ENCODE measurements at regions of chr3 and their contacts with region 1.

Region 1: GRCh38 chr3:155664925-155665695 is 79.8 kb downstream of the PLCH1 start:
- DNase-seq: peak; percentile 30 to 61
- ATAC-seq: peak; percentile 69 to 96 (median 89)
- H3K4me3 ChIP-seq: no peak overlapping the region
- H3K27ac ChIP-seq: peak overlapping the region in 1 of 10 donors; percentile 22
- H3K4me1 ChIP-seq: peaks cover 0 to 13% (median 0%) of the 10 kb centered on the region in 9 donors
- H3K27me3 ChIP-seq: no peaks in the 10 kb centered on the region
- CTCF ChIP-seq: no peak

Region 2: DNA sequence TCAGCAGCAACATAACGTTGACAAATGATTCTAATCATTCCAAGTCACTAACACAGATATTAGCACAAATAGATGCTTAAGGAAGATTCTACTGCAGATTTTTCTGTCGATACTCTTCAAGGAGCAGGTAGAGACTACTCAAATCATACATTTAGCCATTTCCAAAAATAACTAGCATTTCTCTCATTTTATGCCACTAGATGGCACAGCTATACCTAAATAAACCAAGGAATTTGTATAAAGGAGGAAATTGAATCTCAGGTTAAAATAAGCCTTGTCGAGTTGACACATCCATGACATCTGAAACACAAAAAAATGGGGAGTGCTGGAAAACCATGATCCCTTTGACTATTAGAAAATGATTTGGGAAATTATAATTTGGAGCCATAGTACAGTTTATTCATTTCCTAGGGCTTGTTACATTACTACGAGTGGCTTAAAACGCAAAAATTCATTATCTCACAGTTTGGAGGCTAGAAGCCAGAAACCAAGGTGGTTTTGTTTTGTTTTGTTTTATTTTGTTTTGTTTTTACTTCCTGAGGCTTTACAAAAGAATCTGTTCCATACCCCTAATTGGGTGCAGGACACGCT is 312.1 kb before region 1 on chr3:
- intact Hi-C with region 1: loop called in 1 of 10 experiments (anchors 5 kb)
- DNase-seq: no peak
- ATAC-seq: peak in 2 of 8 donors; percentile 37 to 39
- H3K4me3 ChIP-seq: no peak overlapping the region
- H3K27ac ChIP-seq: no peak overlapping the region
- H3K4me1 ChIP-seq: peaks cover 0 to 4% (median 0%) of the 10 kb centered on the region in 9 donors
- H3K27me3 ChIP-seq: no peaks in the 10 kb centered on the region
- CTCF ChIP-seq: peak; percentile 26 to 68 (median 51)